Ovary (tissue), 10 donors: ENCODE measurements at regions of chr9 and their contacts with region 1.

Region 1: GRCh38 chr9:28887188-28887884 is 1314.1 kb upstream of the C9orf72 start:
- DNase-seq: no peak
- H3K4me3 ChIP-seq: no peak overlapping the region
- H3K27ac ChIP-seq: no peak overlapping the region
- H3K4me1 ChIP-seq: no peaks in the 10 kb centered on the region
- H3K27me3 ChIP-seq: no peaks in the 10 kb centered on the region
- CTCF ChIP-seq: no peak
- EP300 ChIP-seq: no peak
- POLR2A ChIP-seq: no peak

Region 2: DNA sequence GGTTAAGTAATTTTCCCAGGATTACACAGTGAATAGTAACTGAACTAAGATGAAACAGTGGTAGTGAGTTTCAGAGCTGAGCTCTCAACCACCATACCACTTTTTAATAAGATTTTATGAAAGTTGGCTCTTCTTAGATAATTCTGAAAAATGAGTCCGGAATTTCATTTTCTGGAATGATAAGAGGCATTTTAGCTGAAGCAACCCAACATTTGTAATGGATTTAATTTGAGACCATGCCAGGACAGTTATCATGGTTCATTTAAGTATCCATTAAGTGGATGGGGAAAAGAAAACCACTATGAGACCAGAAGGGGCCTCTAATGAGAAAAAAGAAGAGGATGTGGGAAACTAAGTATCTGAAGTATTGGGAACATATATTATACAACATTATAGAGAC is 849.4 kb before region 1 on chr9:
- intact Hi-C with region 1: loop called in 1 of 4 experiments (anchors 5 kb)
- DNase-seq: no peak
- H3K4me3 ChIP-seq: no peak overlapping the region
- H3K27ac ChIP-seq: no peak overlapping the region
- H3K4me1 ChIP-seq: no peaks in the 10 kb centered on the region
- H3K27me3 ChIP-seq: no peaks in the 10 kb centered on the region
- CTCF ChIP-seq: no peak
- EP300 ChIP-seq: no peak
- POLR2A ChIP-seq: no peak

Region 3: GRCh38 chr9:28747351-28747985 is 139.9 kb before region 1 on chr9:
- intact Hi-C with region 1: no loop called
- DNase-seq: no peak
- H3K4me3 ChIP-seq: no peak overlapping the region
- H3K27ac ChIP-seq: no peak overlapping the region
- H3K4me1 ChIP-seq: no peaks in the 10 kb centered on the region
- H3K27me3 ChIP-seq: no peaks in the 10 kb centered on the region
- CTCF ChIP-seq: no peak
- EP300 ChIP-seq: no peak
- POLR2A ChIP-seq: no peak

Region 4: DNA sequence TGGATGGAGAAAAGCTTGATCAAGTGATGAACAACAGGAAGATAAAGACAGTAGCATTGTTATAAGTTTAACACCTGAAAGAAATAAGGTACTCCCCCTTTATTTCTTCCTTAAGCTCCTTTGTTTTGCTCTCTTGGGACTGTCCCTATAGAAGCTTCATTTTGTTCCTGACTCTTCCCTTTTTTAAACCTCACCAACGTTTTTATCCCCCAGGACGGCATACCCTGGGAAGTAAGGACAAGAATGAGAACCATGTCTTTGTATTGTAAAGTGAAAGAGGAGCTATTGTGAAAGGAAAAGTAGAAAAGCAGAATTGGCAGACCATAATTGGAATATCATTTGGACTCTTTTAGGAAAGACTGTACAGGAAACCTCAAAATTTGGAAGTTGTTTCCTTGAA is 54.5 kb after region 1 on chr9:
- intact Hi-C with region 1: no loop called
- DNase-seq: no peak
- H3K4me3 ChIP-seq: no peak overlapping the region
- H3K27ac ChIP-seq: no peak overlapping the region
- H3K4me1 ChIP-seq: no peaks in the 10 kb centered on the region
- H3K27me3 ChIP-seq: no peaks in the 10 kb centered on the region
- CTCF ChIP-seq: no peak
- EP300 ChIP-seq: no peak
- POLR2A ChIP-seq: no peak

Region 5: DNA sequence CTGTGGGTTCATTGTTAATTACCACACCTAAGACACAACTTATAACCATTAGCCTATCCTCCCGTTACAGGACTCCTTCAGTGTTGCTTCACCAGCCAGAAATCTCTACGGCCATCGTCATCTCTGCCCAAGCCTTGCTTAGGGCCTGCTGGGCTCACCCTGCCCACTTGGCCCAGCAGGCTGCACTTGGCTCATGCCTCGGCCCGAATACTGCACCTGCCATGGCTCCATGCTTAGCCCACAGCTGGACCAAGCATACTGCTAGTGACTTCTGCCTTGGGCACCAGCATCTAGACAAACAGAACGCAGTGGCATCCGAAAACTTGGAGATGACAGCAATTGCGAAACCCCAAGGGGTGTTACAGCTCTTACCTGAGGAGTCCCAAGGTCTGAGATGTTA is 1161.1 kb after region 1 on chr9:
- intact Hi-C with region 1: no loop called
- DNase-seq: no peak
- H3K4me3 ChIP-seq: no peak overlapping the region
- H3K27ac ChIP-seq: no peak overlapping the region
- H3K4me1 ChIP-seq: no peaks in the 10 kb centered on the region
- H3K27me3 ChIP-seq: no peaks in the 10 kb centered on the region
- CTCF ChIP-seq: no peak
- EP300 ChIP-seq: no peak
- POLR2A ChIP-seq: no peak